ENCODE measurements at regions of chr4 and their contacts with region 1.

Region 1: GRCh38 chr4:139633661-139634060 is 32.0 kb upstream of the MGST2 start:
- DNase-seq: no peak
- ATAC-seq: peak; percentile 97

Region 2: GRCh38 chr4:138576684-138577083 is 1057.0 kb before region 1 on chr4:
- intact Hi-C with region 1: no loop called
- DNase-seq: no peak
- ATAC-seq: no peak

Region 3: GRCh38 chr4:139416073-139416673 is 217.5 kb before region 1 on chr4:
- intact Hi-C with region 1: loop called (anchors 5 kb)
- DNase-seq: no peak
- ATAC-seq: no peak

Region 4: DNA sequence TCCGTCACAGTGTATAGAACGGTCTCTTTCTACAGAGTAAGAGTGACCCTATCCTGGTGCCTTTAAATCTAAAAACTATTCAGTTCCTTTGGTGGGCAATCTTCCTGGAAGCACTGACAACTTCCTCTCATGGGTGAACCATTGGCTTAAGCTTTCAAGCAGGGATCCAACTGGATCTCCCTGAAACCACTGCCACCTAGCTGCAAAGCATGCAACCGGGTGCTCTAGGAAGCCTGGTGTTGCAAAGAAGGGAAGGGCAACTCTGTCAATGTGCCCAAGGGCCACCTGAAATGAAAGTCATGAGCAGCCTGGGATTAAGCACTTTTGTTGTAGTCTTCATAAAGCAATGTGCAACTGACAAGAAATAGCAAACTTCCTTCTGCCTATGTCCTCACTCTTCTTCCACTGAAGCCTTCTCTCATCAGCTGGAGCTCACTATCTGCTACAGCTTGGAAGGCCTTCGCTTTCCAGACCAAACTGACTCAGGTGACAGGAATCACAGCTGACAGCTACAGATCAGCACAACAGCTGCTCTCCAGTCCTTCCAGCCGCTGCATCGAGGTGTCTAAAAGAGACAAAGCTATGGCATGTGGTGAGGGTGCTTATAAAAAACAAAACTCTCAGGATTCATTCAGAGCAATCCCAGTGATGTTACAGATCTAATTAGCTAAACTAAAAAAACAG is 123.8 kb before region 1 on chr4:
- intact Hi-C with region 1: loop called (anchors 10 kb)
- DNase-seq: no peak
- ATAC-seq: peak; percentile 74

Measured in Right ventricle myocardium superior (tissue), 1 donor.